B cell (primary cell): ENCODE measurements at regions of chr3 and their contacts with region 1.

Region 1: DNA sequence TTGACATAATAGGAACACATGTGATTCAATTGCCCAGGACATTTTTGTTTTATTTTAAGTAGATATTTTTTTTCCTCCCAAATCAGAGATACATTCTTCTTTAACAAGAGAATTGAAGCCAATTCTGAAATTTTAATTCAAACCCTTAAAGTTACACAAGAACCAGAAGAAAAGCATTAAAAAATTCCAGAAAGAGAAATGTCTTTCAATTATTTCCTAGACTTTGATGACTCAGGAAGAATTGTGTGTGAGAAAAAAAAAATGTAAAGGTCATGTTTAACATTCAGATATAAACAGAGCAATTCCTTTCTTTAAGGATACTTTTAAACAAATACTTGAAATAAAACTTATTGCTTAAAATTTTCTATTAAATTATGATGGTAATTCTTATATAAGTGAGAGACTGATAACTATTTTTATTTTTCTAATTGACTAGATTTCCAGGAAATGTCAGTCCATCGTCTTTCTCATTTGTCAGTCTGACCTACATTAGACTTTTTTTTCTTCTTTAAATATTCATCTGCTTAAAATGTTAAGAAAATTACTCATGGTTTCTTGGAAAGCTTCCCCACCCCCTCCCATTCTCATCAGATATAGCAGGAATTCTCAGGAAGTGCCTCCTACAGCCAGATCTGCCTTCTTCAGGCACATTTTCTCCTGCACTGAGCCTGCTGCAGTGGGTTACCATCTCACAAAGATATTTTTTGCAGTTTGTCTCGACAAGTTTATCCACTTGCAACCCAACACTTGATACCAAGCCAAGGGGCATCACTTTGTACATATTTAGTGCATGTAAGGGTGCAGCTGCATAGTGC is 261.8 kb upstream of the CBLB start:
- DNase-seq: no peak
- ATAC-seq: no peak
- H3K4me3 ChIP-seq: no peak overlapping the region
- H3K4me3 Mint-ChIP-seq: no peak overlapping the region
- H3K27ac ChIP-seq: no peak overlapping the region
- H3K27ac Mint-ChIP-seq: no peak overlapping the region
- H3K4me1 ChIP-seq: no peaks in the 10 kb centered on the region
- H3K4me1 Mint-ChIP-seq: no peaks in the 10 kb centered on the region
- H3K27me3 ChIP-seq: no peaks in the 10 kb centered on the region
- H3K27me3 Mint-ChIP-seq: peaks cover 3% of the 10 kb centered on the region
- CTCF ChIP-seq: no peak

Region 2: DNA sequence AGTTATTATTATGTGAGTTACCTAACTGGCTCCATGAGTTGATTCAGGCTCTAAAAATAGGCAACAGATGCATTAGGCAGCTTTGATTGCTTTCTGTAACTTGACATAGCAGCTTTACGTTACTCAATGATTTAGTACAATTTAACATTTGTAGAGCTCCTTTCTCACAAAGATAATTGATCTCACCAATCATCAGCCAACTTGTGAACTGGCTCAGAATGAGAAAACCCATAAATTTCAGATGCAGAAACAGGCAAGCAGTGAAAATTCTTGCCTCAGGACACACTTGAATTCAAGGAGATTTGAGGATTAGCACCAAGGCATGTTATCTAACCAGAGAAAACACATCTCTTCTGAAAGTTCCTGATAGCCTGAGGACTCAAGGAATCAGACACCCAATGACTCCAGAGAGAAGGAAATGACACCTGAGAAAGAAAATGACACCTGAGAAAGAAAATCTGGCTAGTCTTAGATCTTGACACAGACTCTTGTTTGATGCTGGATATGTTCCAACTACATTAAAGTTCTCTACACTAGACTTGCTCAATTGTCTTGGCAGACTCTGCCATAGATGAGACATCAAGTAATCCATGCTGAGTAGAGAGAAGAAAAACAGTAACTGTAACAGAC is 53.3 kb after region 1 on chr3:
- CTCF ChIA-PET with region 1: no interaction called
- POLR2A ChIA-PET with region 1: no interaction called
- intact Hi-C with region 1: loop called (anchors 10 kb)
- DNase-seq: no peak
- ATAC-seq: no peak
- H3K4me3 ChIP-seq: no peak overlapping the region
- H3K4me3 Mint-ChIP-seq: no peak overlapping the region
- H3K27ac ChIP-seq: no peak overlapping the region
- H3K27ac Mint-ChIP-seq: no peak overlapping the region
- H3K4me1 ChIP-seq: peaks cover 11 to 14% of the 10 kb centered on the region in 2 donors
- H3K4me1 Mint-ChIP-seq: peaks cover 21% of the 10 kb centered on the region
- H3K27me3 ChIP-seq: no peaks in the 10 kb centered on the region
- H3K27me3 Mint-ChIP-seq: no peaks in the 10 kb centered on the region
- CTCF ChIP-seq: no peak

Region 3: GRCh38 chr3:106206146-106206545 is 75.6 kb after region 1 on chr3:
- CTCF ChIA-PET with region 1: no interaction called
- POLR2A ChIA-PET with region 1: no interaction called
- intact Hi-C with region 1: no loop called
- DNase-seq: peak; percentile 57
- ATAC-seq: peak; percentile 60
- H3K4me3 ChIP-seq: peak overlapping the region in 4 of 5 experiments; percentile 22 to 51 (median 34)
- H3K4me3 Mint-ChIP-seq: peak overlapping the region; percentile 68
- H3K27ac ChIP-seq: peak overlapping the region in 1 of 2 donors; percentile 31
- H3K27ac Mint-ChIP-seq: peak overlapping the region; percentile 42
- H3K4me1 ChIP-seq: peaks cover 15 to 23% of the 10 kb centered on the region in 2 donors
- H3K4me1 Mint-ChIP-seq: peaks cover 27% of the 10 kb centered on the region
- H3K27me3 ChIP-seq: no peaks in the 10 kb centered on the region
- H3K27me3 Mint-ChIP-seq: no peaks in the 10 kb centered on the region
- CTCF ChIP-seq: no peak

Region 4: GRCh38 chr3:106814231-106814630 is 683.6 kb after region 1 on chr3:
- CTCF ChIA-PET with region 1: no interaction called
- POLR2A ChIA-PET with region 1: no interaction called
- intact Hi-C with region 1: no loop called
- DNase-seq: no peak
- ATAC-seq: no peak
- H3K4me3 ChIP-seq: no peak overlapping the region
- H3K4me3 Mint-ChIP-seq: no peak overlapping the region
- H3K27ac ChIP-seq: no peak overlapping the region
- H3K27ac Mint-ChIP-seq: no peak overlapping the region
- H3K4me1 ChIP-seq: no peaks in the 10 kb centered on the region
- H3K4me1 Mint-ChIP-seq: no peaks in the 10 kb centered on the region
- H3K27me3 ChIP-seq: no peaks in the 10 kb centered on the region
- H3K27me3 Mint-ChIP-seq: no peaks in the 10 kb centered on the region
- CTCF ChIP-seq: no peak